Panc1 (cell line): ENCODE measurements at regions of chrX and their contacts with region 1.

Region 1: GRCh38 chrX:80792205-80792604 is 17.5 kb downstream of the BRWD3 start:
- DNase-seq: no peak
- ATAC-seq: no peak
- H3K4me3 ChIP-seq: no peak overlapping the region
- H3K27ac ChIP-seq: no peak overlapping the region
- H3K4me1 ChIP-seq: no peaks in the 10 kb centered on the region
- H3K27me3 ChIP-seq: no peaks in the 10 kb centered on the region
- CTCF ChIP-seq: no peak

Region 2: GRCh38 chrX:80755174-80755573 is 37.0 kb before region 1 on chrX:
- CTCF ChIA-PET with region 1: no interaction called
- POLR2A ChIA-PET with region 1: no interaction called
- in situ Hi-C with region 1: no loop called
- intact Hi-C with region 1: no loop called
- DNase-seq: no peak
- ATAC-seq: no peak
- H3K4me3 ChIP-seq: no peak overlapping the region
- H3K27ac ChIP-seq: no peak overlapping the region
- H3K4me1 ChIP-seq: no peaks in the 10 kb centered on the region
- H3K27me3 ChIP-seq: no peaks in the 10 kb centered on the region
- CTCF ChIP-seq: no peak

Region 3: DNA sequence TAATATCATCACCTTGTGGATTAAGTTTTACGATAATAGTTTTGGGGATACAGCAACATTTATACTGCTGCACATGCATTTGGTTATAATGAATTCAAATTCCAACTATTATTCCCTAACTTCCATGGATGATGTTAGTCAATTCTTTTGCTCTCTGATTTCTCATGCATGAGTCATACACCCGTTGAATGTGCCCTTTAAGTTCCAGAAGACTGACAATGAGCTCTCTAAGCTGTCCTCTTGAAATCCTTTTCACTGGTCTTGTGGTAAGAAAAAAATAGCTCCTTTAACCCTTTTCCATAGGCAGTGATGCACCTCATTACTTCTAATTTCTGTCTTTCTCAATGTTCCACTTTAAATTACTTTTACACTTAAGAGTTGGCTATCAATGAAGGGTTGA is 1620.7 kb after region 1 on chrX:
- CTCF ChIA-PET with region 1: no interaction called
- POLR2A ChIA-PET with region 1: interaction called, 15 read pairs
- in situ Hi-C with region 1: no loop called
- intact Hi-C with region 1: no loop called
- DNase-seq: no peak
- ATAC-seq: no peak
- H3K4me3 ChIP-seq: no peak overlapping the region
- H3K27ac ChIP-seq: no peak overlapping the region
- H3K4me1 ChIP-seq: no peaks in the 10 kb centered on the region
- H3K27me3 ChIP-seq: no peaks in the 10 kb centered on the region
- CTCF ChIP-seq: no peak